HEK293 (cell line): ENCODE measurements at regions of chr15 and their contacts with region 1.

Region 1: DNA sequence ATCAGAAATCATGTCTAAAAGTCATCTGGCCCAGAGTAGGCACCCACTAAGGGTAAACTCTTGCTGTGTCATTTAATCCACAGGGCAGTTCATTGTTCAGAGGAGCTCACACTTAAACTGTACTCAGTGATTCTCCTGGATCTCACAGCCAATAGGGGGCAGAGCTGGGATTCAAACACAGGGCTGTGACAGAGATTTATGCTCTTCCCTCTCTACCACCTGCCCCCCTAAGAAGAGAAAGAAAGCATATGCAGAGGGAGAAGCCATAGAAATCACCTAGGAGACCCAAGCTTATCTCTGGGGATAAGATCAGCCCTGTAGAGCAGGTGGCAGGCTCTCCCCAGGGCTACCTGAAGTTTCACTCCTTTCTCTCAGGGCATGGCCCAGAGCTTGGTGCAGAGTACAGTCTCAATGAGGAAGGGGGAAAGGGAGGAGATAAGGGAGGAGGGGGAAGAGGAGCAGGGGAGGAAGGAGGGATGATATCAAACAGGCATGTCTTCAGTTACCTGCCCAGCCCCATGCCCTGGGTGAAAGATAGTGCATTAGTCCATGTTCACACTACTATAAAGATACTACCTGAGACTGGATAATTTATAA is 51.8 kb upstream of the ADPGK start:
- H3K4me3 ChIP-seq: no peak overlapping the region
- H3K27ac ChIP-seq: no peak overlapping the region
- H3K4me1 ChIP-seq: no peaks in the 10 kb centered on the region
- CTCF ChIP-seq: peak; percentile 38; the same call in 1 of the 2 replicates

Region 2: GRCh38 chr15:72845981-72846383 is 10.6 kb after region 1 on chr15:
- CTCF ChIA-PET with region 1: interaction called, 14 read pairs
- POLR2A ChIA-PET with region 1: no interaction called
- H3K4me3 ChIP-seq: no peak overlapping the region
- H3K27ac ChIP-seq: no peak overlapping the region
- H3K4me1 ChIP-seq: peaks cover 2% of the 10 kb centered on the region; the same call in 1 of the 2 replicates
- CTCF ChIP-seq: no peak